ENCODE measurements at regions of chr14 and their contacts with region 1.

Region 1: GRCh38 chr14:21092273-21093011 is 6.0 kb downstream of the ZNF219 start:
- DNase-seq: peak; percentile 65 to 83 (median 75)
- H3K4me3 ChIP-seq: peak overlapping the region in 19 of 59 donors; percentile 0 to 36 (median 17)
- H3K27ac ChIP-seq: peak overlapping the region in 41 of 59 donors; percentile 2 to 81 (median 34)
- H3K27me3 ChIP-seq: no peaks in the 10 kb centered on the region
- CTCF ChIP-seq: peak; percentile 65 to 100 (median 100)

Region 2: DNA sequence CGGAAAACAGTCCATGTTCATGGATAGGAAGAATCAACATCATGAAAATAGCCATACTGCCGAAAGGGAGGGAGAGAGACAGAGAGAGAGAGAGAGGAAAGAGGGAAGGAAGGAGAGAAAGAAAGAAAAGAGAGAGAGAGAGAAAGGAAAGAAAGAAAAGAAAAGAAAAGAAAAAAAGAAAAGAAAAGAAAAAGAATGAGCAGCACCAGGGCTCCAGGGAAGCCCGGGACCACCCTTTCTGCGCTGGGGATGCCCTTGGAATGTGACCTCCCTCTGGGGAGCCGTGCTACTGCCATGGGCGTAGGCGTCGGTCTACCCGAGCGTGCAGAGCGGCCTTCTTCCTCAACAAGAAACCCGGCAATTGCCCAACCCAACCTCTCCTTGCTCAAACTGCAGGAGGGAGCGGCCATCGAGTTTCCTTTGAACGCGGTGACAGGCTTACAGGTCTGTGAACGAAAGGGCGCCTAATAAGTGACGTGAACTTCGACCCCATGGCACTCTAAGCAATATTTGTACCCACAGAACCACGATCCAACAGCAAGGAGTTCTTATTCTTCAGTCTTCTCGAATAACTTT is 467.9 kb before region 1 on chr14:
- intact Hi-C with region 1: loop called in 1 of 2 experiments (anchors 10 kb)
- DNase-seq: no peak
- H3K4me3 ChIP-seq: peak overlapping the region in 46 of 59 donors; percentile 2 to 59 (median 30)
- H3K27ac ChIP-seq: peak overlapping the region in 1 of 59 donors; percentile 32
- H3K27me3 ChIP-seq: peaks cover 0 to 67% (median 21%) of the 10 kb centered on the region in 45 donors
- CTCF ChIP-seq: no peak

Region 3: DNA sequence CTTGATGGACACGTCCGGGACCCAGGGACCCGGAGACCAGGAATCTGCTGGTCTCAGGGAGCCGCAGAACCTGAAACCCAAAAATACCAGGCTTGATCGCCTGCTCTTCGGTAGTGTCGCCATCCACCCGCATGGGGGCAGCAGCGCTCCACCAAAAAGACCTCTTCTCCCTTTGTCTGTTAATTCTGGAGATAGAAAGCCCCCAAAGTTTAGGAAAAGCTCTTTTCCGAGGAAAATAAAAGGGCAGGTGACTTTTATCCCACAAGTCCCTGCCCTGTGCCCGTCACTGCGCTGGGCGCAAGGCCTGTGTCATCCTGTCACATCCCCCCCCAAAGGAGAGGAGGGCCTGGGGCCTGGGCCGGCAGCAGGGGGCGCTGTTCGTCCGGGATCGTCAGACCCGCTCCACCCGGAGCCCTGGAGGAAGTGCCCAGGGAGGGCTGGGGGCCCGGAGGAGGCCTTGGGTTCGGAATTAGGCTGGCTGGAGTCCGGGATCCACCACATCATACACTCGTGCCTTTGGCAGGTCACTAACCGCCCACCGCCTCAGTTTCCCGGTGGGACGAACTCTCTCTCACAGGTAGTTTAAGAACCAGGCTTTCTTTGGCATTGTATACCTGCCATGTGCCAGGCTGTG is 1464.7 kb after region 1 on chr14:
- intact Hi-C with region 1: no loop called
- DNase-seq: peak; percentile 60 to 85 (median 76)
- H3K4me3 ChIP-seq: peak overlapping the region; percentile 13 to 66 (median 46)
- H3K27ac ChIP-seq: peak overlapping the region in 41 of 59 donors; percentile 5 to 82 (median 55)
- H3K27me3 ChIP-seq: no peaks in the 10 kb centered on the region
- CTCF ChIP-seq: peak in 55 of 56 donors; percentile 80 to 100 (median 99)